Thyroid gland (tissue), 4 donors: ENCODE measurements at regions of chr9 and their contacts with region 1.

Region 1: GRCh38 chr9:38068866-38069629 is at the start of gene SHB:
- DNase-seq: peak; percentile 80 to 82
- H3K4me3 ChIP-seq: peak within 1 kb of the TSS; percentile 69 to 84 (median 77)
- H3K27ac ChIP-seq: peak within 1 kb of the TSS; percentile 88 to 98 (median 97)
- H3K4me1 ChIP-seq: peaks cover 22 to 39% of the 10 kb centered on the region in 2 donors
- H3K27me3 ChIP-seq: no peaks in the 10 kb centered on the region
- CTCF ChIP-seq: peak in 2 of 6 experiments; percentile 11 to 13
- POLR2A ChIP-seq: peak; percentile 88 to 95
- total RNA-seq, gene SHB: 18.4 to 27.5 (median 22.0) TPM

Region 2: GRCh38 chr9:38012767-38013450 is 56.1 kb before region 1 on chr9:
- intact Hi-C with region 1: no loop called
- DNase-seq: no peak
- H3K4me3 ChIP-seq: no peak overlapping the region
- H3K27ac ChIP-seq: no peak overlapping the region
- H3K4me1 ChIP-seq: peaks cover 28 to 38% of the 10 kb centered on the region in 2 donors
- H3K27me3 ChIP-seq: no peaks in the 10 kb centered on the region
- CTCF ChIP-seq: no peak
- POLR2A ChIP-seq: no peak

Region 3: DNA sequence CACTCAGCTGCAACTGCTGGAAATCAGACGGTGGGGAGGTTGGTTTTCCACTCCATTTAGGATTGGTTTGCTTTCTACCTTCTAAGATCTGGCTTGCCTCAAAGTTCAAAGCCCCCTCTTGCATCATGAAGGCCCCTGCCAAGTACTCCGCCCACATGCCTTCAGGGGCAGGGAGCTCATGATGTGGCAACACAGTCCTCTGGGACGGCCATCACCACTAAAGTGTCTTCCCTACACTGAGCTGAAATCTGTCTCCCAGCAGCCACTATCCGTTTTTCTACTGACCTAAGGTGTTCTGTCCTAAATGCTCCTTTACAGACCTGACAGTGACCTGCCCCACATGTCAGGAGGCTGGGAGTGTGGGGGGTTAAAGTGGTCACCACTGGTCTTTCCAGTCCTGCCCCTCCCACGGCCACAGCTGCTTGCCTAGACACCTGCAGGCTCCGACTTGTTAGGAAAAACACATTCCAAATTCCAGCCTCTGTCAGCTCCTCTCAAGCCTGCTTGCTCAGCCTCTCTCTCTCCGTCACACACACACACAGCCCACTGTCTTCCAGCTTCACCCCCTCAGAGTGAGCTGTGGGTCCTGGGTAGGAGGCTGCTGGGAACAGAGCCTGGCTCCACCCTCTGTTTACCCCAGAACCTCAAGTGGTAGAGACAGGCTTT is 44.9 kb before region 1 on chr9:
- intact Hi-C with region 1: loop called (anchors 5 kb)
- DNase-seq: peak; percentile 87 to 90
- H3K4me3 ChIP-seq: no peak overlapping the region
- H3K27ac ChIP-seq: peak overlapping the region; percentile 73 to 84 (median 78)
- H3K4me1 ChIP-seq: peaks cover 56 to 73% of the 10 kb centered on the region in 2 donors
- H3K27me3 ChIP-seq: no peaks in the 10 kb centered on the region
- CTCF ChIP-seq: no peak
- POLR2A ChIP-seq: peak in 1 of 2 donors; percentile 30